Lower leg skin (tissue), 4 donors: ENCODE measurements at regions of chr10 and their contacts with region 1.

Region 1: DNA sequence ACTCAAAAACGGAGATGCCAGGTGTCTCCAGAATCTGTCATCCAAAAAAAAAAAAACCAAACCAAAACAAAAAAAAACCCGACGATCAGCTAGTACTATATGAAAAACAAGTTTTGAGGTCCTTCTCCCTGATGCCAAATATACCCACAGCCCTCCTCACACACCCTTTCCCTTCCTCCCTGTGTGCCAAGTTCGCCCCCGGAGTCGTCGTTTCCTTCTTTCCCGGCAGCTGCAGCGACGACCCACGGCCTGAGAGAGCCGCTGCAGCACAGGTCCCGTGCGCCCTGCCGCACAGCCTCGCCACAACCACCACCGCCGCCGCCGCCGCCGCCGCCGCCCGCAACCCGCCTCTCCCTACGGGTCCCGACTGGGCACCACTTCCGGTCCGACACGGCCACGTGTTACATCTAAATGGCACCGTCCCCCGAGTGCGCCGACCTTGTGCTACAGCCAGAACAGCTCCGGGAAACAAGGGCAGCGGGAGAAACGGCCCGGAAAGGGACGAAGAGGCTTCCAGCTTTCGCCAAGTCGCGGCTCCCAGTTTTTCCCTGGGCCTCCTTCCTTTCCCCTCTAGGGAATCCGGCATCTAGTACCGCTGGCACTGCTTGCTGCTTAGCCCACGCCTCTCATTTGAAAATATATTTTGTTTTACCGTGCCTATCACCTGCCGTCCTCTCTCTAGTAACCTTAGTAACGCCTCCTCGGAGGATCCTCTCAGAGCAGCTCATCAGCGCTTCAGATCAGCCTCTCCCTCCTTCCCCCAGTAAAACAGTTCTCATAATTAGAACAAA is at the start of gene FRA10AC1:
- DNase-seq: peak; percentile 88 to 99
- H3K4me3 ChIP-seq: peak within 1 kb of the TSS; percentile 55
- CTCF ChIP-seq: no peak
- POLR2A ChIP-seq: peak in 1 of 2 donors; percentile 32
- total RNA-seq, gene FRA10AC1: 6.8 to 25.0 (median 11.5) TPM

Region 2: DNA sequence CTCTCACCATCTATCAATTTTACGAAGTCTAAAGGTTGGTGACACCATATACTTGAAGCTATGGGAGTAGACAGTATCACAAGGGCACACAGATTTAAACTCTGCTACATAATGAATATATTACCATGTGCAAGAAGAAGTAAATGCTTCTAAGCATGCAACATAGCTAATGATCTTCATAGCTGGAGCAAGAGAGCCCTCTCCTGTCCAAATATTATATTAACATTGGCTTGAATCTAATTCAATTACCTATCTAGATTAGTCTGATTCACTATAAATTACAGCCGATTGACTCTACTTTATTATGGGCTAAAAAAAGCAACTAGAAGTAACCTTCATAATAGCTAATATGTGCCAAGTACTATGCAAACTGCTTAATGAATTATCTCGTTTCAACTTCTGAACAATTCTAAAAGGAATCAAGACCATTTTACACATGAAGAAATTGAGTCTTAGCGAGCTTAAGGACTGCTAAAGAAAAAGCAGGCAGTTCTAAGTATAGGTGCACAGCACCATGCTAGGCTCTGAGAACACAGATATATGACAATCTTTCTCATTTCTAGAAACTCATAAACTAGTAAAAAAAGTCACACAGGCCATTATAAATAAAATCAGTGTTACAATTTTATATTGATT is 21.9 kb before region 1 on chr10:
- intact Hi-C with region 1: loop called (anchors 1 kb)
- DNase-seq: no peak
- H3K4me3 ChIP-seq: no peak overlapping the region
- CTCF ChIP-seq: no peak
- POLR2A ChIP-seq: no peak

Region 3: DNA sequence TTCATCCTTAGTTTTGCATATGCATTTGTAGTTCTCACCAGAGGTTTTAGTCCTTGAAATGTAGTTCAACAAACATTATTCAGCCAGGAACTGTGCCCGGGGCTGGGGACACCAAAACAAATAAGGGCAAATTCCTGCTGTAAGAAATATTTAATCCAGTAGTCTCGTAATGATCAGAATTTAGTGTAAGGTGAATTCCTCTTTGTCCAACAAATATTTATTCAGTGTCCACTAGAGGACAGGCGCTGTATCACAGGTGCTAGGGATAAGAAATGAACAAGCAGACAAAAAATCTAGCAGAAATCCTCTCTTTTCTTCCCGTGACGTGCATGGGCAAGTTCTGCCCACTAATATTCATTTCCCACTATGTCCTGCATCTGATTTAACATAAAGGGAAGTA is 73.0 kb after region 1 on chr10:
- intact Hi-C with region 1: no loop called
- DNase-seq: no peak
- H3K4me3 ChIP-seq: no peak overlapping the region
- CTCF ChIP-seq: no peak
- POLR2A ChIP-seq: no peak

Region 4: DNA sequence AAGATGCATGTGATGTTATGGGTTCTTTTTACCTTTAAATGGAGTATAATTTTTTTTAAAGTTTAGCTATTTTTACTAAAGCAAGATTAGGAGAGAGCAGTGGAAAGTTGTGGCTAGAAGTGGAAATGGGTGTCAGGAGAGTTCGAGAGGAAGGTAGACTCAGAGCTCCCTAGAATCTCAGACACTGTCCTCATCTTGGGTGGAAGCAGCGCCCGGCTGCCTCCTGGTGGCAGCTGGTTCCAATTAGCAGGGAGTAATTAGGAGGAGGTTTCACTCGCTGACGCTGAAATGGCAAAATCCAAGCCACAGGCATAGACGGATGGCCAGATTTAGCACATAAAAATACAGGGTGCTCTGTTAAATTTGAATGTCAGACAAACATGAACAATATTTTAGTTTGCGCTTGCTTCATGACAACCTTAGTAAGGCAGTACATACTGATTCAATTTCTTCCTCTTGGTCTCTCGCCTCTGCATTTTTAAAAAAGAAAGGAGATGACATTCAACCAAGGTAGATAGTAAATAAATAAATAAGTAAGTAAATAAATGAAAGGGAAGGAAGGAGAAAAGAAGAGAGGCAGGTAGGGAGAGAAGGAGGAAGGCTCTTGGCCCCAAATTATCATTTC is 113.8 kb after region 1 on chr10:
- intact Hi-C with region 1: loop called (anchors 5 kb)
- DNase-seq: peak; percentile 31 to 86
- H3K4me3 ChIP-seq: no peak overlapping the region
- CTCF ChIP-seq: no peak
- POLR2A ChIP-seq: no peak